GM12878 (cell line): ENCODE measurements at regions of chr12 and their contacts with region 1.

Region 1: GRCh38 chr12:96516472-96517430 is 27.4 kb downstream of the CFAP54 start:
- DNase-seq: peak; percentile 95
- ATAC-seq: peak; percentile 80
- H3K4me3 ChIP-seq: peak overlapping the region; percentile 24; the same call in 1 of the 2 replicates
- H3K27ac ChIP-seq: peak overlapping the region; percentile 64
- H3K4me1 ChIP-seq: peaks cover 16% of the 10 kb centered on the region
- H3K27me3 ChIP-seq: no peaks in the 10 kb centered on the region
- CTCF ChIP-seq: peak; percentile 42 to 87 (median 60); a peak in 5 of 6 replicates
- EP300 ChIP-seq: no peak
- POLR2A ChIP-seq: no peak
- RAD21 ChIP-seq: peak; percentile 91

Region 2: DNA sequence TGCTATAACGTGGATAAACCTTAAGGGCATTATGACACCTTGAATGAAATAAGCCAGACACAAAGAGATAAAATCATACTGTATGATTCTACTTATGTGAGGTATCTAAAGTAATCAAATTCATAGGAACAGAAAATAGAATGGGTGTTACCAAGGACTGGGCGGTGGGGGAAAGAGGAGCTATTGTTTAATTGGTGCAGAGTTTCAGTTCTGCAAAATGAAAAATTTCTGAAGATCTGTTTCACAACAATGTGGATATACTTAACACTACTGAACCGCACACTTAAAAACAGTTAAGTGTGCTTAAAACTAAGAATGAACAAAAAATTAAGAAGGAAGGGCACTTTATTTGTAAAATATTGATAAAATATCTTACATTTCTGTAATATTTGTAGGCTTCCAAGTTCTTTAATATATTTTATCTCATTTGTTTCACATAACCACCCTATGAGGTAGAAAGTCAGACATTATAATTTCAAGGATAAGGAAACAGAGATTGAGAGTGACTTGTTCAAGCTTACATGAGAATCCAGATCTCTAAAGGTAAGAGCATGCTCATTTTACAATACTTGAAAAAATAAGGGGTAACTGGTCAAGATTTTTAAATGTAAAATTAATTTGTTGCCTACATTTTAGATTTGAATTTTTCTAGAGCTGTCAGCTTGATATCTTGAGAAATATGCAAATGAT is 496.3 kb before region 1 on chr12:
- CTCF ChIA-PET with region 1: interaction called, 4 read pairs
- POLR2A ChIA-PET with region 1: no interaction called
- RAD21 ChIA-PET with region 1: interaction called, 3 read pairs
- SMC1A ChIA-PET with region 1: interaction called, 11 read pairs
- in situ Hi-C with region 1: no loop called
- intact Hi-C with region 1: no loop called
- DNase-seq: peak; percentile 19
- ATAC-seq: peak; percentile 100
- H3K4me3 ChIP-seq: no peak overlapping the region
- H3K27ac ChIP-seq: peak overlapping the region; percentile 46; the same call in 1 of the 2 replicates
- H3K4me1 ChIP-seq: peaks cover 15% of the 10 kb centered on the region
- H3K27me3 ChIP-seq: no peaks in the 10 kb centered on the region
- CTCF ChIP-seq: no peak
- EP300 ChIP-seq: peak in 1 of 2 experiments; percentile 91; a peak in 2 of 4 replicates
- POLR2A ChIP-seq: no peak
- RAD21 ChIP-seq: no peak

Region 3: GRCh38 chr12:96070670-96071279 is 446.0 kb before region 1 on chr12:
- CTCF ChIA-PET with region 1: interaction called, 10 read pairs
- POLR2A ChIA-PET with region 1: no interaction called
- RAD21 ChIA-PET with region 1: interaction called, 13 read pairs
- SMC1A ChIA-PET with region 1: interaction called, 36 read pairs
- in situ Hi-C with region 1: no loop called
- intact Hi-C with region 1: no loop called
- DNase-seq: peak; percentile 17
- ATAC-seq: peak; percentile 92
- H3K4me3 ChIP-seq: no peak overlapping the region
- H3K27ac ChIP-seq: no peak overlapping the region
- H3K4me1 ChIP-seq: peaks cover 6% of the 10 kb centered on the region
- H3K27me3 ChIP-seq: peaks cover 0 to 2% of the 10 kb centered on the region in 2 experiments; a peak in 2 of 4 replicates
- CTCF ChIP-seq: peak; percentile 20 to 37 (median 34); a peak in 3 of 6 replicates
- EP300 ChIP-seq: no peak
- POLR2A ChIP-seq: no peak
- RAD21 ChIP-seq: peak; percentile 25; the same call in 1 of the 2 replicates

Region 4: GRCh38 chr12:96399919-96400797 is 116.6 kb before region 1 on chr12 and contains the start of gene CDK17:
- CTCF ChIA-PET with region 1: interaction called, 94 read pairs
- POLR2A ChIA-PET with region 1: interaction called, 30 read pairs
- RAD21 ChIA-PET with region 1: interaction called, 130 read pairs
- SMC1A ChIA-PET with region 1: interaction called, 50 read pairs
- in situ Hi-C with region 1: no loop called
- intact Hi-C with region 1: loop called (anchors 1 kb)
- DNase-seq: no peak
- ATAC-seq: peak; percentile 59
- H3K4me3 ChIP-seq: peak within 1 kb of the TSS; percentile 92
- H3K27ac ChIP-seq: peak within 1 kb of the TSS; percentile 96
- H3K4me1 ChIP-seq: peaks cover 24% of the 10 kb centered on the region; the same call in 1 of the 2 replicates
- H3K27me3 ChIP-seq: no peaks in the 10 kb centered on the region
- CTCF ChIP-seq: peak in 2 of 3 experiments; percentile 36 to 58; a peak in 3 of 6 replicates
- EP300 ChIP-seq: no peak
- POLR2A ChIP-seq: peak; percentile 67
- RAD21 ChIP-seq: peak; percentile 58
- polyA plus RNA-seq, gene CDK17: 5.6 to 6.1 TPM

Region 5: DNA sequence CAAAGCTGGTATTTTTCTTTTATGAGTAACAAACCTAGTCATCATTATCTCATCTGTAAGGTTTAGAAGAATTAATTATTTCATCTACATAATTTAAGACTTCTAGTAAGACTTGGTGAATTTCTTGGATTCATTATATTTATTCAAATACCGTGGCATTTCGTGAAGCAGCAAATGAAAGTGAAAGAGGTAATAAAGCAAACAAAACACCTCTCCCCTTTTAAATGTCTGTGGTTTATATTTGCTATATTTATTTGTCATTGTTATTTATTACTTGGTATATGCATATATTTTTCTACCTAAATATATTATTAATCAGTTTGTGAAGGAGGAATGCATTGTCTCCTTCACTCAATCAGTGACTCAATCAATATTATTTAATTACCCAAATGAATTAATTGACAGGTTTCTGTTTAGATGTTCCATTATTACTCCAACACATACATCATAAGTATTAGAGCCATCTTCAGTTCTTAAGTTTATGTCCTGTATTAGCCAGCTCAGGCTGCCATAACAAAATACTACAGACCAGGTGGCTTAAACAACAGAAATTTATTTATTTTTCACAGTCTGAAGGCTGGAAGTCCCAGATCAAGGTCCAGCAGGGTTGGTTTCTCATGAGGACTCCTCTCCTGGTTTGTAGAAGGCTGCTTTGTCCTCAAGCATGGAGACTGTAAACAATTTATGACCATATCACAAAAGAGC is 20.8 kb before region 1 on chr12:
- CTCF ChIA-PET with region 1: interaction called, 304 read pairs
- POLR2A ChIA-PET with region 1: interaction called, 3 read pairs
- RAD21 ChIA-PET with region 1: interaction called, 118 read pairs
- SMC1A ChIA-PET with region 1: interaction called, 237 read pairs
- in situ Hi-C with region 1: no loop called
- intact Hi-C with region 1: loop called (anchors 2 kb)
- DNase-seq: no peak
- ATAC-seq: peak; percentile 74
- H3K4me3 ChIP-seq: no peak overlapping the region
- H3K27ac ChIP-seq: no peak overlapping the region
- H3K4me1 ChIP-seq: peaks cover 15% of the 10 kb centered on the region
- H3K27me3 ChIP-seq: no peaks in the 10 kb centered on the region
- CTCF ChIP-seq: no peak
- EP300 ChIP-seq: peak in 1 of 2 experiments; percentile 12; a peak in 1 of 4 replicates
- POLR2A ChIP-seq: no peak
- RAD21 ChIP-seq: no peak

Region 6: GRCh38 chr12:96548384-96548783 is 31.6 kb after region 1 on chr12:
- CTCF ChIA-PET with region 1: interaction called, 15 read pairs
- POLR2A ChIA-PET with region 1: interaction called, 6 read pairs
- RAD21 ChIA-PET with region 1: interaction called, 15 read pairs
- SMC1A ChIA-PET with region 1: interaction called, 138 read pairs
- in situ Hi-C with region 1: no loop called
- intact Hi-C with region 1: no loop called
- DNase-seq: no peak
- ATAC-seq: peak; percentile 14; the same call in 2 of the 3 replicates
- H3K4me3 ChIP-seq: no peak overlapping the region
- H3K27ac ChIP-seq: no peak overlapping the region
- H3K4me1 ChIP-seq: peaks cover 13% of the 10 kb centered on the region
- H3K27me3 ChIP-seq: no peaks in the 10 kb centered on the region
- CTCF ChIP-seq: no peak
- EP300 ChIP-seq: no peak
- POLR2A ChIP-seq: no peak
- RAD21 ChIP-seq: no peak

Region 7: GRCh38 chr12:96985480-96986362 is 469.0 kb after region 1 on chr12:
- CTCF ChIA-PET with region 1: interaction called, 17 read pairs
- POLR2A ChIA-PET with region 1: no interaction called
- RAD21 ChIA-PET with region 1: interaction called, 8 read pairs
- SMC1A ChIA-PET with region 1: interaction called, 6 read pairs
- in situ Hi-C with region 1: no loop called
- intact Hi-C with region 1: no loop called
- DNase-seq: no peak
- ATAC-seq: peak; percentile 95
- H3K4me3 ChIP-seq: peak overlapping the region; percentile 28; the same call in 1 of the 2 replicates
- H3K27ac ChIP-seq: no peak overlapping the region
- H3K4me1 ChIP-seq: peaks cover 5% of the 10 kb centered on the region
- H3K27me3 ChIP-seq: peaks cover 0 to 6% of the 10 kb centered on the region in 2 experiments; a peak in 3 of 4 replicates
- CTCF ChIP-seq: peak; percentile 78 to 90 (median 80)
- EP300 ChIP-seq: no peak
- POLR2A ChIP-seq: no peak
- RAD21 ChIP-seq: peak; percentile 84